Calu3 (cell line): ENCODE measurements at regions of chr14 and their contacts with region 1.

Region 1: GRCh38 chr14:37447883-37448391 is 147.1 kb downstream of the FOXA1 start:
- DNase-seq: no peak
- H3K4me3 Mint-ChIP-seq: no peak overlapping the region
- H3K27ac Mint-ChIP-seq: peak overlapping the region; percentile 89
- H3K4me1 Mint-ChIP-seq: peaks cover 15% of the 10 kb centered on the region
- H3K27me3 Mint-ChIP-seq: no peaks in the 10 kb centered on the region
- CTCF ChIP-seq: no peak

Region 2: GRCh38 chr14:37422319-37422718 is 25.6 kb before region 1 on chr14:
- CTCF ChIA-PET with region 1: interaction called, 8 read pairs
- intact Hi-C with region 1: loop called (anchors 2 kb)
- DNase-seq: no peak
- H3K4me3 Mint-ChIP-seq: no peak overlapping the region
- H3K27ac Mint-ChIP-seq: peak overlapping the region; percentile 23
- H3K4me1 Mint-ChIP-seq: peaks cover 15% of the 10 kb centered on the region
- H3K27me3 Mint-ChIP-seq: no peaks in the 10 kb centered on the region
- CTCF ChIP-seq: no peak

Region 3: DNA sequence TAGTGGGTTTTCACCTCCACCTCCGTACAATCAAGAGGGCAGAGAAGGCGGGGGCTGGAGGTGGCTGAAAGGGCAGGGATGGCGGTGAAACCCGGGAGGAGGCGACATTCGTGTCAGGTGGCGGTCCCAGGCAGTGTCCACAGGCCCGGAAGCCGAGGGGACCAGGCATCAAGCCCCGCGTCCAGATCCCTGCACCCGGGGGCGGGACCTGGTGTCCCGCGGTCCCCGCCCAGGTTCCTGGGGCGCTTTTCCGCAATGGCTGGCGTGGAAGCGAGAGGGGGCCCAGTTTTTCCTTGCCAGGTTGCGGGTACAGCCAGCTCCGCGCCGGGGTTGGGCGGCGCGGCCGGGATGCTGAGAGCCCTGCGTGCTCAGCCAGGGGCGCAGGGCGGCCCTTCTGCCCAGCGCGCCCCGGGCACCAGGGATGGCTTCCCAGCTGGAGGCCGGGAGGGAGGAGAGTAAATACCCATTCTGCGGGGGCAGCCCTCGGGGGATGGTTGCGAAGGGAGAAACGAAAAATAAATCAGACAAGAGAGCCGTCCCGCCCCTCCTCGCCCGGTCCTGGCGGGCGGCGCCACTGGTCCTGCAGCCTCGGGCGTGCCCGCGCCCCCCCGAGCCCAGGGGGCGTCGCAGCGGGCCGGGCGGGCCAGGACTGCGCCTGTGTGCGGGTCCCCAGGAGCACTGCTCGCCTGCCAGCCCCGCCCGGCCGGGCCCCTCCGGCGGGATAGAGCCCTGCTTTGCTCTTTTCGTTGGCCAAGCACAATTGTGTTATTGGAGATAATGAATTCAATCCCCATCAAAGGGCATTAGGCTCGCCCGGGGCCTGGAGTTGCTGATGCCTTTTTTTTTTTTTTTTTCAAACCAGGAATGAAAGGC is 135.7 kb after region 1 on chr14:
- CTCF ChIA-PET with region 1: no interaction called
- intact Hi-C with region 1: loop called (anchors 5 kb)
- DNase-seq: peak; percentile 79
- H3K4me3 Mint-ChIP-seq: peak overlapping the region; percentile 86
- H3K27ac Mint-ChIP-seq: peak overlapping the region; percentile 85
- H3K4me1 Mint-ChIP-seq: peaks cover 35% of the 10 kb centered on the region
- H3K27me3 Mint-ChIP-seq: no peaks in the 10 kb centered on the region
- CTCF ChIP-seq: no peak